H1 (cell line): ENCODE measurements at regions of chr15 and their contacts with region 1.

Region 1: DNA sequence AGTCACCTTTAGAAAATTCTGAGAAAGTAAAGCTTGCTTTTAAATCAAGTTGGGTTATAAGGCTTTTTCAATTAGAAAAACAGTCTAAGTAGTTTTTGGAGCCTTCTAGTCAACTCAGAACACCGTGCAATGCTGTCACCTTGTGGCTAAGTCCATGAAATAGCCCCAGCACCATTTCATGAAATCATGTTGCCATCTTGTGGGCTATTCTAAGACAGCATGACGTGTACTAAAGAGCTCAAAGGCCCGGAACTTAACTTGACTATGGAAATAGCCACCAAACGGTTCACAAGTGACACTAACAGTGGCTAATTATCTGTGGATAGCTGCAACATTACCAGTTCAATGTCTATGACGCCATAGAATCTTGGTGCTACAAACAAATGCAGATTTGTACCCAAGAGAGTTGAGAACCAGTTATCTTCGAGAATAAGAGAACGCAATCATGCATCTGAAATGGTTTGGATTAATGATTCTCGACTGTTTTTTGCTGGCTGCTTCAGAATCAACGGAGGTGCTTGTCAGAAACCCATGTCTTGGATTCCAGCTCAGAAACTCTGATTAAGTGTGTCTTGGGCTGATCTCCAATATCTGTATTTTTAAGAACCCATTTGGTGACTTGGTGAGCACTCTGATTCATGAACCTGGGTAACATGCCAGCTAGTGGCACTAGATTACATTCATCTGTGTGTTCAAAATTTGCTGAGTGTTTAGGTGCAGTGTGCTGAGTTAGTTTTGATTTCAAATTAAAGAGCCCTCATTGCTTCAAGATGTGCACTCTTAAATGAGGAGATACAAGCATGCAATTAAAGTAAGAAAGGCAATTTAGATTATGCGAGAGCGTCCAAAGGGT is 111.2 kb upstream of the MCTP2 start:
- DNase-seq: peak; percentile 23 to 54
- H3K4me3 ChIP-seq: no peak overlapping the region
- H3K27ac ChIP-seq: no peak overlapping the region
- H3K4me1 ChIP-seq: peaks cover 0 to 5% (median 2%) of the 10 kb centered on the region in 4 experiments; a peak in 4 of 7 replicates
- H3K27me3 ChIP-seq: no peaks in the 10 kb centered on the region
- CTCF ChIP-seq: peak; percentile 23 to 100 (median 98)
- EP300 ChIP-seq: no peak
- POLR2A ChIP-seq: no peak
- RAD21 ChIP-seq: peak; percentile 100

Region 2: GRCh38 chr15:93035953-93036800 is 1084.0 kb before region 1 on chr15:
- CTCF ChIA-PET with region 1: interaction called, 77 read pairs
- POLR2A ChIA-PET with region 1: no interaction called
- DNase-seq: peak in 1 of 2 experiments; percentile 67
- H3K4me3 ChIP-seq: no peak overlapping the region
- H3K27ac ChIP-seq: no peak overlapping the region
- H3K4me1 ChIP-seq: no peaks in the 10 kb centered on the region; a peak in 2 of 7 replicates
- H3K27me3 ChIP-seq: peaks cover 0 to 2% (median 0%) of the 10 kb centered on the region in 4 experiments; a peak in 1 of 7 replicates
- CTCF ChIP-seq: peak; percentile 48 to 78 (median 76)
- EP300 ChIP-seq: no peak
- POLR2A ChIP-seq: no peak
- RAD21 ChIP-seq: peak; percentile 66 to 76

Region 3: DNA sequence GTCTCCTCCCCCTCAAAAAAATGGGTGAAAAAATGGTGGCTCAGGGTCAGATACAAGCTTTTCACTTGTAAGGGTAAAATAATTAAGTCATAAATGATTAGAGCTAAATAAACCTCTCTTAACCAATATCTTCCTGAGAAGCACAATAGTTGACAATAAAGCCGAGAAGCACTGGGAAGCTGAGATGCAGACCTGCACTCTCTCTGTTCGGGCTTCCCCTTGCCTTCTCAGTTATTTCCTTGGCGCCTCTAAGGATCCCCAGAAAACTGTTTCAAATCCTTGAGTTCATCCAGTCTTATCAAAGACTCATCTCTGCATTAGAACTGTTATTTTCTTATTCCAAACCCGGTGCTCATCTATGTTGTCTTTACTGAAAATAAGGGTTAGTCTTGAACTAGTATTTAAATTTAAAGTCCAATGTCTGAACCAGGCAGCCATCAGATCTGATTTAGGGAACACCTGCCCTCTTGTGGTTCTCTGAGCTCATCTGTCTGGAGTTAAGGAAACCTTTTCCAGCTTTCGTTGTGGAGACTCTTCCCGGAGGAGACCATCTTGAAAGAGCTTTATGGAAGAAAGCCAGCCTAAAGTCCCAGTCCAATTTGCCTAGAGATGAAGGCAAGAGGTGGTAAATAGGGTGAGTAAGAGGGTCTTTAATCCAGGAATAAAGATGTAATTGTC is 145.2 kb before region 1 on chr15:
- CTCF ChIA-PET with region 1: interaction called, 18 read pairs
- POLR2A ChIA-PET with region 1: no interaction called
- DNase-seq: peak in 1 of 2 experiments; percentile 15
- H3K4me3 ChIP-seq: no peak overlapping the region
- H3K27ac ChIP-seq: no peak overlapping the region
- H3K4me1 ChIP-seq: no peaks in the 10 kb centered on the region
- H3K27me3 ChIP-seq: no peaks in the 10 kb centered on the region
- CTCF ChIP-seq: peak in 2 of 3 experiments; percentile 65 to 69; a peak in 3 of 4 replicates
- EP300 ChIP-seq: no peak
- POLR2A ChIP-seq: no peak
- RAD21 ChIP-seq: peak; percentile 83 to 84

Region 4: DNA sequence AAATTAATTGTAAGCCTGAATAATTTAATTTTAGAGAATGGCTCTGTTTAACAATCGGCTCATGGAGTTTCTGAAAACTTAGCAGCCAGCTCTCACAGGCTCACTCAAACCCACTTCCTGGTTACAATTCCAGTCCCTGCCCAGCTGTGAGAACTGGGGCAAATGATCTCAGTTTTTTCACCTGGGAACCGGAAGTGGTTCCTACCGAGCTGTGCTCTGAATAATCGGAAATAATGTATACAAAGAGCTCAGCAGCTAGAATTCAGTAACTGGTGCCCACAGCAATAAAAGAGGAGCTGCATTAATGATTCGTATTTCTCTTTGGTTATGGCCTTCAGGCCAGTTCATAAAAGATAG is 133.1 kb before region 1 on chr15:
- CTCF ChIA-PET with region 1: interaction called, 10 read pairs
- POLR2A ChIA-PET with region 1: no interaction called
- DNase-seq: no peak
- H3K4me3 ChIP-seq: no peak overlapping the region
- H3K27ac ChIP-seq: no peak overlapping the region
- H3K4me1 ChIP-seq: no peaks in the 10 kb centered on the region
- H3K27me3 ChIP-seq: no peaks in the 10 kb centered on the region
- CTCF ChIP-seq: no peak
- EP300 ChIP-seq: no peak
- POLR2A ChIP-seq: no peak
- RAD21 ChIP-seq: no peak

Region 5: DNA sequence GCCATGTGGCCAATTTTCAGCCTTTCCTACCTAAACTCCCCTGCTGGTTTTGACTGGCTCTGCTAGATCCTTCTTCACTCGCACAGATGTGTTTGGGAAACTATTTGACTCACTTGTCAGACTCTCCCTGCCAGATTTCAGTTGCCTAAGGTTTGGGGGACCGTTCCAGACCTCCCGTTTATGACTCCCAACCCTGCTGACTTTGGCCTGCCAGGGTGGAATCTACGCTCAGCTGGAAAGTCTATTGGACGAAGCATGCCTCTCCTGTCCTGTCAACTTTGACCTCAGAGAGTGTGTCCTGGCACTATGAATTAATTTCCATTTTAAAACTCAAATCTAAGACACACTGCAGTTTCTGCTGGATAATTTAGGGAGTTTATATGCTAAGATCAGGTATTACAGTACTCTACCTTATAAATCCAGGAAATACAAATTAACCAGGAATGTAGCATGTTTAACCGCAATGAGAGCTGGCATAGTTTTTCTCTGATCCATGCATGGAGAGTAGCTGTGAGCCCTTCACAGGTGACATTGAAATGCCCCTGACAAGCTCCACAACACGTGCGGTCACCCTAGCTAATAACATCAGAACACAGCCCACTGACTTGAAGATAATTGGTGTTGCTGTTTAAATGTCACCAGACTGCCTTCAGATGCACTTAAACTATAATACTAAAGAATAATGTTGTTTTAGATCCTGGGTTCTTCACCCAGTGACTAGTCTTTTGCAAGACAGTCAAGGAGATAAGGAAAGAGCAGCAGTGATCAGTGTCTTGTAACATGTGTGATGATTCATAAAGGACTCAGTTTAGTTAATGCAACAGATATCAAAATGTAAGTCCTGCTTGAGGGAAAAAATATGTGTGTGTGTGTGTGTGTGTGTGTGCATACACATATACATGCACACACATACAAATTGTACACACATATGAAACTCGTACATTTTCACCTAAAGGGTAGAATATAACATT is 111.8 kb before region 1 on chr15:
- CTCF ChIA-PET with region 1: interaction called, 25 read pairs
- POLR2A ChIA-PET with region 1: no interaction called
- DNase-seq: no peak
- H3K4me3 ChIP-seq: no peak overlapping the region
- H3K27ac ChIP-seq: no peak overlapping the region
- H3K4me1 ChIP-seq: no peaks in the 10 kb centered on the region
- H3K27me3 ChIP-seq: no peaks in the 10 kb centered on the region
- CTCF ChIP-seq: no peak
- EP300 ChIP-seq: no peak
- POLR2A ChIP-seq: no peak
- RAD21 ChIP-seq: no peak